Activated CD8-positive, alpha-beta T cell treated with anti-CD3 and anti-CD28 coated beads, Interleukin-2, amount 10 ng/mL, durations not matched to agents 7 days and 5 days (primary cell): ENCODE measurements at regions of chr12 and their contacts with region 1.

Region 1: GRCh38 chr12:12032851-12033588 is 37.7 kb upstream of the BCL2L14 start:
- DNase-seq: peak; percentile 75
- ATAC-seq: peak; percentile 91
- H3K4me3 Mint-ChIP-seq: peak overlapping the region; percentile 72
- H3K27ac Mint-ChIP-seq: peak overlapping the region; percentile 71
- H3K4me1 Mint-ChIP-seq: peaks cover 21% of the 10 kb centered on the region
- H3K27me3 Mint-ChIP-seq: peaks cover 3% of the 10 kb centered on the region

Region 2: DNA sequence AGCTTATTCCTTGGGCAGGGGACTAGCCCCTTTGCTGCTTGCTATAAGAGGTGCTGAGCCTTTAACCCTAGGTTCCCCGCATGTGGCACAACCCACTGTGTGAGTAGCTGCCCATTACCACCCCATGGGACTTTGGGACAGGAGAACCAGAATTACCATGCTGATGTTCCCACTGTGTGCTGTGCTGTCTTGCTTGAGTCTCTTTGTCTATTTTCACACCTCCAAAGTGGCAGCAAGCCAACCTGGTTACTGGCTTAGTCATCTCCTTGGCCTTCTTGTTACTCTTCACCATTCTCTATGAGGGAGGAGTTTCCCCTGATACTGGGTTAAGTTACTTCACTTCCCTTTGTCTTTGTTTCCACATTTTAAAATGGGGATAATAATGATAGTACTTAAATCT is 456.9 kb before region 1 on chr12:
- CTCF ChIA-PET with region 1: interaction called, 142 read pairs
- POLR2A ChIA-PET with region 1: no interaction called
- DNase-seq: no peak
- ATAC-seq: no peak
- H3K4me3 Mint-ChIP-seq: no peak overlapping the region
- H3K27ac Mint-ChIP-seq: no peak overlapping the region
- H3K4me1 Mint-ChIP-seq: no peaks in the 10 kb centered on the region
- H3K27me3 Mint-ChIP-seq: peaks cover 31% of the 10 kb centered on the region

Region 3: DNA sequence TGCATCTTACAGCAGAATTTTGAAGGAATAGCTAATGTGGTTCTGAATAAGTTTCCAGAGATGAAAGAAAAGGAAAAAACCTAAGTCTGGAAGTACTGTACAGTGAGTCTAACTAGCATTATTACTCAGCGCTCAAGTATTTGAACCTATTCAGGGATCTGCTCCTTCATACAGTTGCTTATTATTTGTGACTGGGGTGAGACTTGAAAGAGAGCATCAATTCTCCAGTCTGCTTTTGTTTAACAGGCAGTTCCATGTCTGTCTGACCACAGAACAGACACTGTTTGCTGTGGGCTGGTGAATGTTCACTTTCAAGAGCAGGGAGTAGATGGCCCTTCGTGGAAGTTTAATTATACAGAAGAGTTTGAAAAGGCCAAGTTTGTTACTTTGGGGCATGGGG is 374.2 kb before region 1 on chr12:
- CTCF ChIA-PET with region 1: interaction called, 16 read pairs
- POLR2A ChIA-PET with region 1: no interaction called
- DNase-seq: no peak
- ATAC-seq: no peak
- H3K4me3 Mint-ChIP-seq: no peak overlapping the region
- H3K27ac Mint-ChIP-seq: no peak overlapping the region
- H3K4me1 Mint-ChIP-seq: peaks cover 56% of the 10 kb centered on the region
- H3K27me3 Mint-ChIP-seq: no peaks in the 10 kb centered on the region

Region 4: DNA sequence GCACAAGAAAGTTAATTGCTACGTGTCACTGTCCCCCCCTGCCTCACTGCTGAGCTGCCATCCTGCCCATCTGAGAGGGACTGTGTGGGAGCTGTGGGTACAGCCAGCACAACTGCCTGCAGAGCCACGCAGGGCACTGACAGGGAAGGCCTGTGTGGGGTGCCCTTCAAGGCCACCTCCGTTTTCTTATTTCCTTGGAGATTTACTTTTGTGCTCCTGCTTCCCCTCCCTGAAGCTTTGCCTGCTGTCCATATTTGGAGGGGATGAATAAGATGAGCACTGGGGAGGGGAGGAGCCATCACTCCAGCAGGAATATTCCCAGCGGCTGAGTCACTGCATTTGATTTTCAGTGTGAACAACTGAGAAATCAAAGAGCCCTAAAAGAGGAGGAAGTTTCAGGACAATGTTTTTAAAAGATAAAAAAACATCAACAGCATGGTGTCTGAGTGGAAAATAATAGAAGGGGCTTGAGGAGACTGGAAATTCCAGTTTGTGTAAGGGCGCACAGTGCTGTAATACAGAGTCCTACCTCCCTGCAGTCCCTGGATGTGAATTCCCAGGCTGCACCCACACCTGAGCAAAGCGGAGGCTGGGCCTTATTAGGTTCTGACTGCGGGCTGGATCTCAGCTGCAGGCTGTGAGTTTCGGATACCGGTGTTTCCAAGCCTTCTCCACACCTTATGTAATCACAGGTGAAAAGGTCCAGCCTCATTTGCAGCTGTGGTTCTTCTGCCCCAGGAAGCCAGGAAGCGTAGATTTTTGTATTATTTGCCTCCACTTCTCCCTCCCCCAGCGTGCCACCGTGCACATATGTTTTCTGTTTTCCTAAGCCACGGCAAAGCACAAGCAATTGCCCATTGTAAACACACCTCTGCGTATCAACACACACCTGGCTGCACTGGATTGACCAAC is 154.9 kb before region 1 on chr12:
- CTCF ChIA-PET with region 1: interaction called, 14 read pairs
- POLR2A ChIA-PET with region 1: no interaction called
- DNase-seq: no peak
- ATAC-seq: no peak
- H3K4me3 Mint-ChIP-seq: no peak overlapping the region
- H3K27ac Mint-ChIP-seq: no peak overlapping the region
- H3K4me1 Mint-ChIP-seq: peaks cover 24% of the 10 kb centered on the region
- H3K27me3 Mint-ChIP-seq: no peaks in the 10 kb centered on the region

Region 5: GRCh38 chr12:12008931-12009611 is 23.9 kb before region 1 on chr12:
- CTCF ChIA-PET with region 1: interaction called, 90 read pairs
- POLR2A ChIA-PET with region 1: interaction called, 3 read pairs
- DNase-seq: peak; percentile 70
- ATAC-seq: peak; percentile 75
- H3K4me3 Mint-ChIP-seq: peak overlapping the region; percentile 69
- H3K27ac Mint-ChIP-seq: peak overlapping the region; percentile 95
- H3K4me1 Mint-ChIP-seq: peaks cover 64% of the 10 kb centered on the region
- H3K27me3 Mint-ChIP-seq: peaks cover 7% of the 10 kb centered on the region

Region 6: DNA sequence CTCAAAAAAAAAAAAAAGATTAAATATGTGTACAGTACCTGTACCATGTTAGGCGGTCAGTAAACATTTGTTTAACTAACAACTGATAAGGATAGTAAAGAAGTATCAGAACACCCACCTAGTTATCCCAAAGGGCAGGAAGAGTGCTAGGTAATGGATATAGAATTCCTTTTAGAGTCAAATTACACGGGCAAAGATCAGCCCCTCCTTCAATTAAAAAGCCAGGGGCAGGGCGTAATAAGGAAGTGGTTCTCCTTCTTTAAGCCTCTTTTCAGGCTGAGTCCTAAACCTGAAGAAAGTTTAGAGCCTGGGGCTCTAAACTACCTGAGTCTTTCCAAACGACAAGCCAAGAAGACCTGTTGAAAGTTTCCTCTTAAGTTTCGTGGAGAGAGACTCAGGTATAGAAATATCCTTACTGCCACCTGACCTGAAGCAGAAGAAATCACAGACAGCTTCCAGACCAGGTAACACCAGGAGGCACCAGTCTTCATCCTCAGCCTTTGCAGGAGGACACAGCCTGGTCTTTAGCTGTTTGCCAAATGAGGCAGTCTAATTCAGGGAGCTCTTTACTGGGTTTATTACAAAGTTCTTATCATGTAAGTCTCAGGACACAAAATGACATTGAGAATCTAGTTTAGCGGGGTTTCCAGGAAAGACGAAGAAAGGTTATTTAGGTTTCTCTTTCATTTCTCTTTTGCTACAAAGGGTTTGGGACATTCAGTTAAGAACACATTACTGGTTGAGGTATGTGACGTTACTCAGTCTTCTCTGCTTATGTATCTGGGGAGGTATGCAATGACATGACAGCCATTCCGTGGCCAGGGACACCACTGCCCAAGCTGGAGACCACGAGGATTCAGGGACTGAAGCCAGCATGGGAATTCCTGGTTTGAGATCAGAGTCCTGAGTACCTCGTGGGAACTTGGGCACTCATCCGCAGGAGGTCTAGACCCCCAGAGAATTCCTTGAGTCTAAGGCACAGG is 37.9 kb after region 1 on chr12 and contains the start of gene BCL2L14:
- CTCF ChIA-PET with region 1: interaction called, 16 read pairs
- POLR2A ChIA-PET with region 1: interaction called, 3 read pairs
- DNase-seq: peak; percentile 35
- ATAC-seq: peak; percentile 82
- H3K4me3 Mint-ChIP-seq: peak within 1 kb of the TSS; percentile 84
- H3K27ac Mint-ChIP-seq: peak within 1 kb of the TSS; percentile 94
- H3K4me1 Mint-ChIP-seq: peaks cover 24% of the 10 kb centered on the region
- H3K27me3 Mint-ChIP-seq: peaks cover 2% of the 10 kb centered on the region
- total RNA-seq, gene BCL2L14: 3.1 to 5.7 TPM

Region 7: GRCh38 chr12:12138203-12139154 is 105.5 kb after region 1 on chr12:
- CTCF ChIA-PET with region 1: no interaction called
- POLR2A ChIA-PET with region 1: no interaction called
- DNase-seq: no peak
- ATAC-seq: no peak
- H3K4me3 Mint-ChIP-seq: no peak overlapping the region
- H3K27ac Mint-ChIP-seq: no peak overlapping the region
- H3K4me1 Mint-ChIP-seq: no peaks in the 10 kb centered on the region
- H3K27me3 Mint-ChIP-seq: peaks cover 26% of the 10 kb centered on the region